A549 (cell line): ENCODE measurements at regions of chr2 and their contacts with region 1.

Region 1: DNA sequence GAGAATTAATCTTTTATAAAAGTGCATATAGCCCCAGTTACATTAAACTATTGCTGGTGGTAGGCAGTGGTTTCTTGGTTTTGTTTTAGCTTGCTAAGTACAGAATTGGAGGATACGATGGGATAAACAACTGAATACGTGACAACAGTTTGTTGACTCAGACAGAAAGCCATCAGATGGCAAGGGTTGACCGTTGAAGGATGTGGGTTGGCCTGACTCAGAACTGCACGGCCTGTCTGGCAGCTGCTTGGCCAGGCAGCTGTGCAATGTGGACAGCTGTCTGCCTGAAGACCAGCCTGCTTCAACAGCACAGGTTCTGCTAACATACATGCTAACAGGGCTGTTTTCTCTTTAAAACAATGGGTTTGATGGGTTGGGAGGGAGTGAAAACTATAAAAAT is 46.6 kb downstream of the PRKRA start:
- DNase-seq: no peak
- ATAC-seq: peak; percentile 62 to 73; a peak in 4 of 6 replicates
- H3K4me3 ChIP-seq: no peak overlapping the region
- H3K27ac ChIP-seq: no peak overlapping the region
- H3K4me1 ChIP-seq: no peaks in the 10 kb centered on the region
- CTCF ChIP-seq: no peak
- EP300 ChIP-seq: no peak
- POLR2A ChIP-seq: no peak
- RAD21 ChIP-seq: no peak

Region 2: DNA sequence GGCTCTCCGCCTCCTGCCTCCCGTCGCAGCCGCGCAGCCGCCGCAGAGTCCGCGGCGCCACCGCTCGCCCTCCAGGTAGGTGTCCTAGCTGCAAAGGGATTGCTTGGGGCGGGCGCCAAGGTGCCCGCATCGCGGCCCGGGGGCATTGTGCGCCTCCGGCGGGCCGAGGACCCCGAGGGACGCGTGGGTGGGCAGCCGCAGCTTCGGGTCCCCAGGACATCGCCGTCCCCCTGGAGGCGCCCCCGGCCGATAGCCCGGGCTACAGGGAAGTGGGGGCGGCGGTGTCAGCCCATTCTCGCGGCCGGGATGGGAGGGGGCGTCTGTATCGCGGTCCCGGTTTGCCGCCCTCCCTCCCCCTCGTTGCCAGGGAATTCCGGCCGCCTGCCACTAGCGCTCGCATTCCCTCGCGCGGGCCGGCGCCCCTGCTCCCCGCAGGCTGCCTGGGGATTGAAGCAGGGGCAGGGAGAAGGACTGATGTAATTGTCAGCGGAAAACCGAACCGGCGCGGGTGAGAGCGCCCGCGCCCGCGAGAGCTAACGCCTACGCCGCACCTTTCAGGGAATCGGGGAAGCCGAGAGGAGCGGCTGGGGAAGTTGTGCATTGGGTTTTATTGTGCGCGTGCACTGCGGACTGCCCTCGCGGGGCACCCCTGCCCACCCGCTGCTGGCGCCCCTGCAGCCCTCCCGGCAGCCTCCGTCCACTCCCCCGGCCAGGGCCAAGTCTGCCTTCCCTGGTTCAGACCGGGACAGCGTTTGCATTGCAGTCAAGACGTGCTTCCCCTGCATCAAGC is 209.6 kb before region 1 on chr2:
- CTCF ChIA-PET with region 1: no interaction called
- POLR2A ChIA-PET with region 1: interaction called, 10 read pairs
- DNase-seq: peak in 1 of 2 experiments; percentile 58
- ATAC-seq: peak; percentile 64 to 68
- H3K4me3 ChIP-seq: peak overlapping the region; percentile 78
- H3K27ac ChIP-seq: peak overlapping the region; percentile 73 to 93
- H3K4me1 ChIP-seq: peaks cover 14% of the 10 kb centered on the region
- CTCF ChIP-seq: no peak
- EP300 ChIP-seq: no peak
- POLR2A ChIP-seq: no peak
- RAD21 ChIP-seq: no peak

Region 3: DNA sequence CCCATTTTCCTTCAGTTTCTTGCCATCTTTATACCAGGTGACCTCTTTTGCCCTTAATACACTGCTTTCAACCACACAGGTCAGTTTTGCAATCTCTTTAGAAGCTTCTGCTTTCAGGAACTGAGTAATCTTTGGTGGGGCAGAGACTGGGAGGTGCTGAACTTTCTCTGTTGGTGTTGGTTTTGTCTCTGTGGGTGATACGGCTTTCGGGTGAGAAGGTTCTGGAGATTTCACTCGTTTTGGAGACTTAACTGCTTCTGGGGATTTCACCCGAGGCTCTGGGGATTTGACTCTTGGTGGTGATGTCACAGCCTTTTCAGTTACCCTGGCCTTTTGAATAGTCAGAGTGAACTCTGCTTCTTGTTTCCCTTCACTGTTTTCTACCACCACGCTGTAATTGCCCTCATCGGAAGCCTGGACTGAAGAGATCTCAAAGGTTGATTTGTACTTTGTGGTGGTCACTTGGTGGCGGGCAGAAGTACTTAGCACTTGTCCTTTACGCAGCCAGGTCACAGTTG is 126.3 kb after region 1 on chr2:
- CTCF ChIA-PET with region 1: no interaction called
- POLR2A ChIA-PET with region 1: no interaction called
- DNase-seq: no peak
- ATAC-seq: no peak
- H3K4me3 ChIP-seq: no peak overlapping the region
- H3K27ac ChIP-seq: no peak overlapping the region
- H3K4me1 ChIP-seq: no peaks in the 10 kb centered on the region
- CTCF ChIP-seq: no peak
- EP300 ChIP-seq: no peak
- POLR2A ChIP-seq: no peak
- RAD21 ChIP-seq: no peak